ENCODE measurements at regions of chr4 and their contacts with region 1.

Region 1: GRCh38 chr4:40193016-40193571 is 3.7 kb upstream of the RHOH start:
- DNase-seq: peak in 8 of 14 experiments; percentile 43 to 79 (median 51)
- ATAC-seq: peak; percentile 25
- H3K4me3 ChIP-seq: peak overlapping the region; percentile 74
- H3K4me3 Mint-ChIP-seq: peak overlapping the region; percentile 94
- H3K27ac ChIP-seq: peak overlapping the region; percentile 67 to 99
- H3K27ac Mint-ChIP-seq: peak overlapping the region; percentile 99
- H3K4me1 ChIP-seq: peaks cover 43% of the 10 kb centered on the region
- H3K4me1 Mint-ChIP-seq: peaks cover 72% of the 10 kb centered on the region
- H3K27me3 ChIP-seq: no peaks in the 10 kb centered on the region
- H3K27me3 Mint-ChIP-seq: peaks cover 5% of the 10 kb centered on the region
- CTCF ChIP-seq: no peak

Region 2: DNA sequence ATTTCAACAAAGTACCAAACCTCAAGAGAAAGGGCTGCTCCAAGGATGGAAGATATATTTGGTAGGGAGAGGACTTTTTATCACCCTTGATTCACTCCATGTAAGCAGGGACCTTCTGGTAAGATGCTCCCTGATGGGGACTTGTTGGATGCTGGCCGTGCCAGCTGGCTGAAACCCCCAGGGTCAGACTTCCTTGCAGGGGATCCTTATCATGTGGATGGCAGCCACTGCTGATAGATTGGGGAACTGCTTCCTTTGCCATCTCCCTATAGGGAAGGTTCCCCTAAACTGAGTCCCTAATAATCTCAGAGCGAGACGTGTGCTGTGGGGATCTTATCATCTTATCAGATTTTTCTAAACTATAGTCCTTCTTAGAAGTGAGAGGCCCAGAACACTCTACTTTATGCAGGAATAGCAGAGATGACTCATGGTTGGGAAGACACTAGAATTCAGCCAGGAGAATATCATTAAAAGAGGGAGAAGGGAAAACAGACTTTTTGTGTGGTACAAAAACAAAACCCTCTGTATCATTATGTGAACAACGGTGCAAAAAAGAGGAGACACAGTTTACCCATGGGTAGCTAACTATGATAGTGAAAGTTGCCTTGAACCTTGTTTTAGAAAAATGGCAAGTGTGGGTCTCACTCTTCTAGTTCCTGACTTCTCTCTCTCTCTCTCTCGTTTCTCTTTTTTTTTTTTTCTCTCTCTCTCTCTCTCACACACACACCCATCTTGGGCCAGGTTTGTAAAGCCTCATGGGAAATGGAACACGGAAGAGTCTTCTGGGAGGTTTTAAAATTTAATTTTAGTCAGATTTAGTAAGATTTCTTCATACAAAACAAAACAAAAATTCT is 19.8 kb after region 1 on chr4:
- CTCF ChIA-PET with region 1: interaction called, 3 read pairs
- POLR2A ChIA-PET with region 1: interaction called, 112 read pairs
- intact Hi-C with region 1: loop called in 1 of 2 experiments (anchors 2 kb)
- DNase-seq: peak in 1 of 14 experiments; percentile 26
- ATAC-seq: no peak
- H3K4me3 ChIP-seq: peak overlapping the region; percentile 25
- H3K4me3 Mint-ChIP-seq: peak overlapping the region; percentile 71
- H3K27ac ChIP-seq: peak overlapping the region; percentile 73 to 85
- H3K27ac Mint-ChIP-seq: peak overlapping the region; percentile 99
- H3K4me1 ChIP-seq: peaks cover 74% of the 10 kb centered on the region
- H3K4me1 Mint-ChIP-seq: peaks cover 94% of the 10 kb centered on the region
- H3K27me3 ChIP-seq: no peaks in the 10 kb centered on the region
- H3K27me3 Mint-ChIP-seq: no peaks in the 10 kb centered on the region
- CTCF ChIP-seq: no peak

Region 3: GRCh38 chr4:40238700-40239548 is 45.8 kb after region 1 on chr4:
- CTCF ChIA-PET with region 1: interaction called, 3 read pairs
- POLR2A ChIA-PET with region 1: interaction called, 20 read pairs
- intact Hi-C with region 1: loop called (anchors 2 to 5 kb)
- DNase-seq: peak; percentile 50 to 95 (median 69)
- ATAC-seq: peak; percentile 93
- H3K4me3 ChIP-seq: peak overlapping the region; percentile 46
- H3K4me3 Mint-ChIP-seq: peak overlapping the region; percentile 55
- H3K27ac ChIP-seq: peak overlapping the region; percentile 79 to 97
- H3K27ac Mint-ChIP-seq: peak overlapping the region; percentile 93
- H3K4me1 ChIP-seq: peaks cover 99% of the 10 kb centered on the region
- H3K4me1 Mint-ChIP-seq: peaks cover 92% of the 10 kb centered on the region
- H3K27me3 ChIP-seq: no peaks in the 10 kb centered on the region
- H3K27me3 Mint-ChIP-seq: no peaks in the 10 kb centered on the region
- CTCF ChIP-seq: no peak